ENCODE measurements at regions of chr1 and their contacts with region 1.

Region 1: DNA sequence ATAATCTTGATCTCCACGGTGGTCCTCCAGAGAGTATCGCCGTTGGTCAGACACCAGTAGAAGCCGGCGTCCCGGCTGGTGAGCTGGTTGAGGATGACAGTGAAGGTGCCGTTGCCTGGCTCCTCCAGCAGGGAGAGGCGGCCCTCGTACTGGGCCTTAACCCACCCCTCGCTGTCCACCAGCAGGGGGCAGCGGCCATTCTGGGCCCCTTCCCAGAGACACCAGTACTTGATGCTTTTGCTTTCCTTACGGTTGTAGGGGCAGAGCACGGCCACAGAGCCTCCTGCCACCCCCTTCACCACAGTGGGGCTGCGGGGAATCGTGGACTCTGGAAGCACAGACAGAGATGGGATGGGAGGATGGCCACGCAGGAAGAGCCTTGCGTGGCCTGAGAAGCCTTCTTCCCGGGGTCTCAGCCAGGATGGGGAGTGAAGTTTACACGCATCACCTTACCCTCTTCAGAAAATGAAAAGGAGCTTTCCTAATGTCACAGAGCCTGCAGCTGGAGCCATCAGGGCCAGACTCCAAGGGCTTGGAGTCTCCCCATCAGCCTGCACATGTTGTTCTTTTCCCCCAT is 10.7 kb downstream of the PIGR start:
- DNase-seq: no peak
- H3K4me3 ChIP-seq: no peak overlapping the region
- H3K27me3 ChIP-seq: peaks cover 1% of the 10 kb centered on the region; the same call in 1 of the 2 replicates
- CTCF ChIP-seq: peak; percentile 60

Region 2: GRCh38 chr1:205763980-205764379 is 1171.6 kb before region 1 on chr1:
- CTCF ChIA-PET with region 1: no interaction called
- POLR2A ChIA-PET with region 1: no interaction called
- DNase-seq: no peak
- H3K4me3 ChIP-seq: no peak overlapping the region
- H3K27me3 ChIP-seq: no peaks in the 10 kb centered on the region
- CTCF ChIP-seq: no peak

Region 3: DNA sequence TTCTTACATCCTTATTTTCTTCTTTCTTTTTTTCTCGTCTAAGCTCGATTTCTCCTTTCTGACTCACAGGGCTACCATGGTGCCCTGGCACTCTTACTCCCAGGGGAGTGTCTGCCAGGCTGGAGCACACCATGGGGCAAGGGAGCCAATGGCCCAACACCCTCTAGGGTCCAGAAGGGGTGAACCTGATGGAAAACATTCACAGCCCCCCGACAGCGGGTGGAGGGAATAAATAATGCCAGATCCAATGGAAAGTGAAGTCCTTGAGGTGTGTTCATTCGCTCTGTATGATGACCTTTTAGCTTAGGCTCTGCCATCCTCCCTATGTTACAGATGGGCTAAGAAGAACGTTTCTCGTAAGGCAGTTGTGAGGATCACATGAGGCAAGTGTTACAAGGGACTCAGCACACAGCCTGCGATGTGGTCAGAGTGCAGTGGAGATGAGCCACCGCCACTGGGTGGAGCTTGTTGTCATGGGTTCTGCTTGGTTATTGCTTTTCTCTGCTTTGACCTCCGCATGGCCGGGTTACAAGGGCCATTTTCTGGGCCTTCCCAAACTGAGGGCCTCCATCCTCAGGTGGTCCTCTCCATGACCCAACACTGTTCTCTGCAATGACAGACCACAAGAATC is 10.4 kb before region 1 on chr1:
- CTCF ChIA-PET with region 1: interaction called, 12 read pairs
- POLR2A ChIA-PET with region 1: no interaction called
- DNase-seq: no peak
- H3K4me3 ChIP-seq: no peak overlapping the region
- H3K27me3 ChIP-seq: no peaks in the 10 kb centered on the region; the same call in 1 of the 2 replicates
- CTCF ChIP-seq: no peak

Region 4: GRCh38 chr1:206949208-206949607 is 13.6 kb after region 1 on chr1:
- CTCF ChIA-PET with region 1: interaction called, 22 read pairs
- POLR2A ChIA-PET with region 1: no interaction called
- DNase-seq: no peak
- H3K4me3 ChIP-seq: no peak overlapping the region
- H3K27me3 ChIP-seq: peaks cover 14% of the 10 kb centered on the region
- CTCF ChIP-seq: no peak

Measured in BJ (cell line).